ENCODE measurements at regions of chr17 and their contacts with region 1.

Region 1: DNA sequence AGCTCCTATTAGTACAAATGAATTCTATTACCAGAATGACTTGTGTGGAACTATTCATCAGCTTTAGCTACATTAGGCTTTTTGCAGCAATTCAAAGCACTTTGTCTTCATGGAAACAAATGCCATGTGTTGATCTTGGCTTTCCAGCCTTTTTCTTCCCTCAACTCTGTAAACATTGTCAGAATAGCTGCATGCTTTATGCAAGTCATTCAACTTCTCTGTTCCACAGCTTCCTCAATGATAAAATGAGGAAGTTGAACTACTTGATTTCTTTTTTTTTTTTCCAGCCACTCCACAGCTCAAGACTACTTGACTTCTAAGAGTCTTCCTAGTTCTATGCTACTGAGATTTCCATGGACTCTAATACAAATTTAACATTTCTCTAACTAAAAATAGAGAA is 41.1 kb downstream of the KIAA0753 start:
- DNase-seq: no peak
- ATAC-seq: no peak
- H3K4me3 ChIP-seq: no peak overlapping the region
- H3K27ac ChIP-seq: no peak overlapping the region
- H3K4me1 ChIP-seq: no peaks in the 10 kb centered on the region
- H3K27me3 ChIP-seq: no peaks in the 10 kb centered on the region
- CTCF ChIP-seq: no peak
- EP300 ChIP-seq: no peak
- POLR2A ChIP-seq: no peak
- RAD21 ChIP-seq: no peak

Region 2: GRCh38 chr17:6507535-6507934 is 91.8 kb before region 1 on chr17:
- CTCF ChIA-PET with region 1: no interaction called
- POLR2A ChIA-PET with region 1: no interaction called
- RAD21 ChIA-PET with region 1: no interaction called
- SMC1A ChIA-PET with region 1: no interaction called
- in situ Hi-C with region 1: no loop called
- intact Hi-C with region 1: no loop called
- DNase-seq: no peak
- ATAC-seq: no peak
- H3K4me3 ChIP-seq: no peak overlapping the region
- H3K27ac ChIP-seq: no peak overlapping the region
- H3K4me1 ChIP-seq: no peaks in the 10 kb centered on the region
- H3K27me3 ChIP-seq: no peaks in the 10 kb centered on the region; a peak in 1 of 4 replicates
- CTCF ChIP-seq: no peak
- EP300 ChIP-seq: no peak
- POLR2A ChIP-seq: no peak
- RAD21 ChIP-seq: no peak

Region 3: GRCh38 chr17:6572978-6573370 is 26.4 kb before region 1 on chr17:
- CTCF ChIA-PET with region 1: interaction called, 4 read pairs
- POLR2A ChIA-PET with region 1: interaction called, 12 read pairs
- RAD21 ChIA-PET with region 1: no interaction called
- SMC1A ChIA-PET with region 1: no interaction called
- in situ Hi-C with region 1: no loop called
- intact Hi-C with region 1: no loop called
- DNase-seq: no peak
- ATAC-seq: no peak
- H3K4me3 ChIP-seq: no peak overlapping the region
- H3K27ac ChIP-seq: no peak overlapping the region
- H3K4me1 ChIP-seq: peaks cover 13% of the 10 kb centered on the region
- H3K27me3 ChIP-seq: no peaks in the 10 kb centered on the region
- CTCF ChIP-seq: no peak
- EP300 ChIP-seq: no peak
- POLR2A ChIP-seq: no peak
- RAD21 ChIP-seq: no peak